Right ventricle myocardium inferior (tissue), 1 donor: ENCODE measurements at regions of chr11 and their contacts with region 1.

Region 1: DNA sequence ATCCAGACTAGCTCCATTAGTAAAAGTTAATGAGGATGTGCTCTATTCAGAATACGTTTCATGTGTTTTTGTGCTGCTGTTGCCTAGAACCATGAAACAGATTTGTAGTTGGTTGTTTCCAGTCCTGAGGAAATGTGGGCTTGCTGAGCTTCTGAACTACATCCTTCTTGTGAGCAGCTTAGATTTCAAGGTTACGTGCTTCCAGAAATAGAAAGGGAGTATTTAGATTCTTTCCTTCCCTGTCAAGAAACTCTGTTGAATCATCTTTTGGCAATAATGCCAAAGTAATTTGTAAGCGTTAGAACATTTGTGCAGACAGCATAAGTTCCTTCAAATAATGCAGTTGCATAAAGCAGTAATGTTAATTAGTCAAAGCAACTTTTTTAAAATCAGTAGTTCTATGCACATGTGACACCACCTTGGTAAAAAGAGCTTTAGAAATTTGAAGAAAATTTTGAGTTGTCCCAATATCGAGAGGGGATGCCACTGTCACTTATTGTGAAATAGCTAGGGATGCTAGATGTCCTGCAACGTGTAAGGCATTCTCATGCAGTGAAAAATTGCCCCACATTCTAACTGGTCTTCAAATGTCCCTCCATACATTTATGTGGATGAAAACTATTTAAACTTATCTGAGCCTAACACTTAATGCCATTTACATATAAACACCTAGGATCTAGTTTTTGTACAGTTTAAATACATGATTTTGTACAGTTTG is 169.6 kb downstream of the ETS1 start:
- DNase-seq: no peak
- ATAC-seq: no peak

Region 2: GRCh38 chr11:128328955-128329551 is 88.7 kb before region 1 on chr11:
- intact Hi-C with region 1: no loop called
- DNase-seq: no peak
- ATAC-seq: peak; percentile 31

Region 3: DNA sequence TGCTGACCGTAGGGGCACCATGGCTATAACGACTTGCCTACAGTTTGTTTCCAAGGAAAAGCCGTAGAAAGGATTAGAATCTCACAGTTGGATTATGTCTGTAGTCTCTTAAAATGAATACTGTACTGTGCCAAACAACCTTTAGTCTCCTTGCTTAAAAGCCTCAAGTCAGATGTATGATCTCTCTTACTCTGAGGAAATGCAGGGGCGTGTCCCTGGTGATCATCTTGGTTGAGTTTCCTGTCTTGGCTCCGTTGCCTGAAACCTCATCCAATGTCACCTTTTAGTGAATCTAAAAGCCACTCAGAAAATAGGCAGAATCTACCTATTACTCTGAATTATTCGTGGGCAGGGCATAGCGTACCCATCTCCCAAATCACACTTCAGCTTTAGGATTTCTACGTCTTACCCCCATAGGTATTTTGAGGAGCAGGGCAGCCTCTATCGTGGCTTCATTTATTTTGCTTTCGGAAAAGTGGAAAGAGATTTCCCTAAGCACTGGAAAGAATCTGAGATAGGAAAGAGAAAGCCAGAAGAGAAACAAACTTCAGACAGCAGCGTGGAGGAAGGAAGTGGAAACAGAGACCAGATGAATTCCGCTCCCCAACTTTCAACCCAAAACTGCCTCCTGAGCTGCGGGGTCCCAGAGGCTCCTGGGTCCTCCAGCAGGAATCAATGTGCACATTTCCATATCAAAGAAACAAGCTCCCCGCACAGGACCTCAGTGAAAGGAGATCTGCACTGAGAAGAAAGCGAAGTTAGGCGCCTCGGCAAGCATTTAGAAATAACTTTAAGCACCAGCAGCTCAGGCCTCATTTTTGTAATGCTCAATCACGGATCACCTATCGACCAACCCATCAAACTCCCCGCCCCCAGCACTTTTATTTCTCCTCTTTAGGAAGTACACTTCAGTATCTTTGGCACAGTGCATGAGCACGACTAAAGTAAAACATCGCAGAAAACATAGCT is 76.2 kb before region 1 on chr11:
- intact Hi-C with region 1: loop called (anchors 2 kb)
- DNase-seq: no peak
- ATAC-seq: peak; percentile 42